Activated CD4-positive, alpha-beta memory T cell treated with anti-CD3 and anti-CD28 coated beads for 36 hours (primary cell): ENCODE measurements at regions of chr3 and their contacts with region 1.

Region 1: GRCh38 chr3:42502429-42503250 is at the start of gene VIPR1:
- DNase-seq: peak; percentile 94
- H3K4me3 Mint-ChIP-seq: peak within 1 kb of the TSS; percentile 91
- H3K27ac Mint-ChIP-seq: peak within 1 kb of the TSS; percentile 50
- H3K4me1 Mint-ChIP-seq: peaks cover 44% of the 10 kb centered on the region
- H3K27me3 Mint-ChIP-seq: peaks cover 27% of the 10 kb centered on the region
- total RNA-seq, gene VIPR1: 5.9 to 6.5 TPM

Region 2: GRCh38 chr3:42336103-42336502 is 166.5 kb before region 1 on chr3:
- CTCF ChIA-PET with region 1: no interaction called
- POLR2A ChIA-PET with region 1: no interaction called
- intact Hi-C with region 1: no loop called
- DNase-seq: no peak
- H3K4me3 Mint-ChIP-seq: no peak overlapping the region
- H3K27ac Mint-ChIP-seq: no peak overlapping the region
- H3K4me1 Mint-ChIP-seq: no peaks in the 10 kb centered on the region
- H3K27me3 Mint-ChIP-seq: peaks cover 3% of the 10 kb centered on the region

Region 3: GRCh38 chr3:42518800-42519567 is 16.3 kb after region 1 on chr3:
- CTCF ChIA-PET with region 1: interaction called, 12 read pairs
- POLR2A ChIA-PET with region 1: interaction called, 5 read pairs
- intact Hi-C with region 1: loop called (anchors 1 kb)
- DNase-seq: peak; percentile 61
- H3K4me3 Mint-ChIP-seq: no peak overlapping the region
- H3K27ac Mint-ChIP-seq: peak overlapping the region; percentile 81
- H3K4me1 Mint-ChIP-seq: peaks cover 29% of the 10 kb centered on the region
- H3K27me3 Mint-ChIP-seq: no peaks in the 10 kb centered on the region

Region 4: GRCh38 chr3:42539869-42540714 is 37.5 kb after region 1 on chr3:
- CTCF ChIA-PET with region 1: interaction called, 76 read pairs
- POLR2A ChIA-PET with region 1: interaction called, 5 read pairs
- intact Hi-C with region 1: loop called (anchors 1 kb)
- DNase-seq: peak; percentile 76
- H3K4me3 Mint-ChIP-seq: no peak overlapping the region
- H3K27ac Mint-ChIP-seq: no peak overlapping the region
- H3K4me1 Mint-ChIP-seq: peaks cover 7% of the 10 kb centered on the region
- H3K27me3 Mint-ChIP-seq: no peaks in the 10 kb centered on the region

Region 5: GRCh38 chr3:42581709-42582473 is 79.3 kb after region 1 on chr3 and contains the start of gene SEC22C:
- CTCF ChIA-PET with region 1: interaction called, 3 read pairs
- POLR2A ChIA-PET with region 1: interaction called, 3 read pairs
- intact Hi-C with region 1: loop called (anchors 1 kb)
- DNase-seq: peak; percentile 98
- H3K4me3 Mint-ChIP-seq: peak within 1 kb of the TSS; percentile 83
- H3K27ac Mint-ChIP-seq: peak within 1 kb of the TSS; percentile 91
- H3K4me1 Mint-ChIP-seq: peaks cover 42% of the 10 kb centered on the region
- H3K27me3 Mint-ChIP-seq: no peaks in the 10 kb centered on the region
- total RNA-seq, gene SEC22C: 47.0 to 49.2 TPM

Region 6: GRCh38 chr3:42635111-42635510 is 132.5 kb after region 1 on chr3:
- CTCF ChIA-PET with region 1: no interaction called
- POLR2A ChIA-PET with region 1: no interaction called
- intact Hi-C with region 1: loop called (anchors 1 kb)
- DNase-seq: no peak
- H3K4me3 Mint-ChIP-seq: no peak overlapping the region
- H3K27ac Mint-ChIP-seq: no peak overlapping the region
- H3K4me1 Mint-ChIP-seq: peaks cover 20% of the 10 kb centered on the region
- H3K27me3 Mint-ChIP-seq: no peaks in the 10 kb centered on the region